HepG2 (cell line): ENCODE measurements at regions of chr1 and their contacts with region 1.

Region 1: GRCh38 chr1:48236716-48237470 is 14.4 kb downstream of the SLC5A9 start:
- DNase-seq: peak; percentile 28
- ATAC-seq: peak; percentile 76
- H3K4me3 ChIP-seq: no peak overlapping the region
- H3K27ac ChIP-seq: no peak overlapping the region
- H3K4me1 ChIP-seq: peaks cover 14% of the 10 kb centered on the region
- H3K27me3 ChIP-seq: no peaks in the 10 kb centered on the region; a peak in 1 of 5 replicates
- CTCF ChIP-seq: peak; percentile 75
- EP300 ChIP-seq: no peak
- POLR2A ChIP-seq: 0 out of 4 replicates have a peak, but pooled peaks of 1 of the 2 experiments have one; percentile 0
- RAD21 ChIP-seq: peak; percentile 77

Region 2: GRCh38 chr1:48093696-48094528 is 143.0 kb before region 1 on chr1:
- CTCF ChIA-PET with region 1: interaction called, 15 read pairs
- POLR2A ChIA-PET with region 1: no interaction called
- in situ Hi-C with region 1: no loop called
- intact Hi-C with region 1: loop called (anchors 2 kb)
- DNase-seq: peak; percentile 65
- ATAC-seq: peak; percentile 99
- H3K4me3 ChIP-seq: peak overlapping the region; percentile 15 to 65 (median 43); a peak in 5 of 6 replicates
- H3K27ac ChIP-seq: no peak overlapping the region
- H3K4me1 ChIP-seq: peaks cover 4% of the 10 kb centered on the region; the same call in 1 of the 2 replicates
- H3K27me3 ChIP-seq: peaks cover 0 to 9% of the 10 kb centered on the region in 2 experiments; a peak in 3 of 5 replicates
- CTCF ChIP-seq: peak; percentile 91
- EP300 ChIP-seq: no peak
- POLR2A ChIP-seq: no peak
- RAD21 ChIP-seq: peak; percentile 77

Region 3: DNA sequence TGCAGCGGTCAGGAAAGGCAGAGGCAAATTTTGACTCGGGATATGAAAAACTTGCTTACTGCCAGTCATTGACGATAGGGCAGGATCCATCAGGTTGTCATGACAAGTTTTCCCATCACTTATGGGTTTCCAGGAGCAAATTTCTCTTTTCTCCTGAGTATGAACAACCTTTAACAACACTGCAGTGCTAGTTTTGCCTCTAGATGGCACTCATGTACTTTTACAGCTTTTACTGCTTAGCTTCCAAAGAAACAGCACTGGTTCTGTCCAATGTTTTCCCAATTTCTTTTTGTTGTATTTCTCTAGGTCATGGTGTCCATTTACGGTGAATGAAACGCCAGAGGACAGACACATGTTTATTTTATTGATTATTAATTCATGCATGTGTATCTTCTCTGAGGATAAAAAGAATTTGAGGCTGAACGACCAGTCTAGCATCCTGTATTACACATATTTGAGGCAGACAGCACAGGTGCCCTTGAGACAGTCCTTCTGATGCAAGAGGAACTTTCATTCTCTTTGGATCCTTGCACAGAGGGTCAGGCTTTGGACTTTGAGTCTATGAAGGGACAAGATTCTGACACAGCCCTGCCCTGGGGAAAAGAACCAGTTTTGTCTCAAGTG is 127.4 kb before region 1 on chr1:
- CTCF ChIA-PET with region 1: interaction called, 8 read pairs
- POLR2A ChIA-PET with region 1: no interaction called
- in situ Hi-C with region 1: no loop called
- intact Hi-C with region 1: loop called (anchors 1 kb)
- DNase-seq: peak; percentile 61
- ATAC-seq: peak; percentile 84
- H3K4me3 ChIP-seq: no peak overlapping the region
- H3K27ac ChIP-seq: no peak overlapping the region
- H3K4me1 ChIP-seq: peaks cover 6% of the 10 kb centered on the region
- H3K27me3 ChIP-seq: no peaks in the 10 kb centered on the region
- CTCF ChIP-seq: peak; percentile 89
- EP300 ChIP-seq: no peak
- POLR2A ChIP-seq: no peak
- RAD21 ChIP-seq: peak; percentile 72

Region 4: GRCh38 chr1:48164571-48164970 is 72.3 kb before region 1 on chr1:
- CTCF ChIA-PET with region 1: no interaction called
- POLR2A ChIA-PET with region 1: no interaction called
- in situ Hi-C with region 1: no loop called
- intact Hi-C with region 1: no loop called
- DNase-seq: no peak
- ATAC-seq: no peak
- H3K4me3 ChIP-seq: no peak overlapping the region
- H3K27ac ChIP-seq: no peak overlapping the region
- H3K4me1 ChIP-seq: no peaks in the 10 kb centered on the region
- H3K27me3 ChIP-seq: no peaks in the 10 kb centered on the region
- CTCF ChIP-seq: no peak
- EP300 ChIP-seq: no peak
- POLR2A ChIP-seq: no peak
- RAD21 ChIP-seq: no peak